H1 (cell line): ENCODE measurements at regions of chr11 and their contacts with region 1.

Region 1: DNA sequence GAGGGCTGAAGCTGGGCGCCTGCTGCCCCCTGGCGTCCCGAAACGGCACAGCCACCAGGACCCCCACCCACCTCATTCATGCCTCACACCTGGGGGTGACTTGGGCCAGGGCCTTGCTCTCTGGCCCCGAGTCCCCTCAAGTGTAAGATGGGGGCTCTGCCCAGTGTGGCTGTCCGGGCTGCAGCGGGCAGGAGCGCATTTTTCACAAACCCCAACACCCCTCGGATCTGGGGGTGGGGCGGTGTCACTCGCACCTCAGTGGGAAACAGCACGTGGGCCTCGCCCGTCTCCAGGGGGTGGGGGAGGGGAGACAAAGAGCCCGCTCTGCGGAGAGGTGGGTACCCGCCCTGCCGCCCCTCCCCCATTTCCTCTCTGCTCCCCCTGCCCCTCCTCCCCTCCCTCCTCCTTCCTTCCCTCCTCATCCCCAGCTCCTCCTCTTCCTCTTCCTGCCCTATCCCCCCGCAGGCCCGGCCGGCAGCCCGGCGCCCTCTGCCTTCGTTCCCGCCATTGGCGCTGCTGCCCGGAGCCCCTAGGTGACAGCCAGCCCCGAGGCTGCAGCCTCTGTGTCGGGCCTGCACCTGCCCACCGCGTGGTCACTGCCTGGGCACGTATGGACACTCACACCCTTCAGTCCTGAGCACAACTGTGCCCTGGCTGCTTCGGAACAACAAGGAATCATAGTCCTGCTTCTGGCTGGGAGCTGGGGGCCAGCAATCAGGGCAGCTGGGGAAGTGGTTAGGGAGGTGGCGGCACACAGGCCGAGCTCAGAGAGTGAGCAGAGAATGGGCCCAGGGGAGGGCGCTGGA is 6.8 kb upstream of the CDKN1C start:
- DNase-seq: peak; percentile 59 to 91
- H3K4me3 ChIP-seq: peak overlapping the region; percentile 25 to 52 (median 40)
- H3K27ac ChIP-seq: peak overlapping the region; percentile 72; the same call in 1 of the 2 replicates
- H3K4me1 ChIP-seq: peaks cover 0 to 20% (median 15%) of the 10 kb centered on the region in 4 experiments; a peak in 6 of 7 replicates
- H3K27me3 ChIP-seq: peaks cover 0 to 23% (median 7%) of the 10 kb centered on the region in 4 experiments; a peak in 5 of 7 replicates
- CTCF ChIP-seq: peak in 2 of 3 experiments; percentile 92 to 93; a peak in 3 of 4 replicates
- EP300 ChIP-seq: 0 out of 3 replicates have a peak, but pooled peaks of 1 of the 2 experiments have one; percentile 6
- POLR2A ChIP-seq: no peak; a peak in 1 of 3 replicates
- RAD21 ChIP-seq: peak; percentile 90 to 94

Region 2: GRCh38 chr11:2799881-2800654 is 92.3 kb before region 1 on chr11:
- CTCF ChIA-PET with region 1: interaction called, 10 read pairs
- POLR2A ChIA-PET with region 1: interaction called, 3 read pairs
- DNase-seq: peak in 1 of 2 experiments; percentile 40
- H3K4me3 ChIP-seq: no peak overlapping the region
- H3K27ac ChIP-seq: no peak overlapping the region
- H3K4me1 ChIP-seq: peaks cover 0 to 1% (median 0%) of the 10 kb centered on the region in 4 experiments; a peak in 3 of 7 replicates
- H3K27me3 ChIP-seq: peaks cover 0 to 22% (median 12%) of the 10 kb centered on the region in 4 experiments; a peak in 6 of 7 replicates
- CTCF ChIP-seq: no peak
- EP300 ChIP-seq: no peak
- POLR2A ChIP-seq: no peak
- RAD21 ChIP-seq: no peak

Region 3: DNA sequence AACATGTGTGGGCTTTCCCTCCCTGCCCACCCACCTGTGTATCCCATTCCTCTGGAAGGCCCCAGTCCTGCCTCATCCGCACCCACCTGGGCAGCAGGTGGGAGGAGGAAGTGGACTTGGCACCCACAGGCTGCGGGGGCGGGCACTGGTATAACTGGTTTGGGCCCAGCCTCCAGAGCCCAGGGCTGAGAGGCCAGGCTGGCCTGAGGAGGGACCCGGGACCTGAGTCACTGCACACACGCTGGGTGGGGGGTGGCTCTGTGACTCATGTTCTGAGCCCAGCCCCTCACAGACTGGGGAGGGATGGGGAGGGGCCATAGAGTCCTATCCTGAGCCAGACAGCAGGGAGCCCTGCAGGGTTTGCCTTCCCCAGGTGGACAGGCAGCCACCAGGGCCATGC is 20.1 kb after region 1 on chr11:
- CTCF ChIA-PET with region 1: interaction called, 19 read pairs
- POLR2A ChIA-PET with region 1: no interaction called
- DNase-seq: no peak
- H3K4me3 ChIP-seq: no peak overlapping the region
- H3K27ac ChIP-seq: no peak overlapping the region
- H3K4me1 ChIP-seq: peaks cover 0 to 19% (median 8%) of the 10 kb centered on the region in 4 experiments; a peak in 4 of 7 replicates
- H3K27me3 ChIP-seq: no peaks in the 10 kb centered on the region
- CTCF ChIP-seq: no peak
- EP300 ChIP-seq: no peak
- POLR2A ChIP-seq: no peak
- RAD21 ChIP-seq: no peak

Region 4: GRCh38 chr11:2921261-2921660 is 28.8 kb after region 1 on chr11:
- CTCF ChIA-PET with region 1: interaction called, 129 read pairs
- POLR2A ChIA-PET with region 1: interaction called, 4 read pairs
- DNase-seq: no peak
- H3K4me3 ChIP-seq: no peak overlapping the region
- H3K27ac ChIP-seq: no peak overlapping the region
- H3K4me1 ChIP-seq: no peaks in the 10 kb centered on the region
- H3K27me3 ChIP-seq: peaks cover 0 to 4% (median 0%) of the 10 kb centered on the region in 4 experiments; a peak in 1 of 7 replicates
- CTCF ChIP-seq: no peak
- EP300 ChIP-seq: no peak
- POLR2A ChIP-seq: no peak
- RAD21 ChIP-seq: no peak

Region 5: DNA sequence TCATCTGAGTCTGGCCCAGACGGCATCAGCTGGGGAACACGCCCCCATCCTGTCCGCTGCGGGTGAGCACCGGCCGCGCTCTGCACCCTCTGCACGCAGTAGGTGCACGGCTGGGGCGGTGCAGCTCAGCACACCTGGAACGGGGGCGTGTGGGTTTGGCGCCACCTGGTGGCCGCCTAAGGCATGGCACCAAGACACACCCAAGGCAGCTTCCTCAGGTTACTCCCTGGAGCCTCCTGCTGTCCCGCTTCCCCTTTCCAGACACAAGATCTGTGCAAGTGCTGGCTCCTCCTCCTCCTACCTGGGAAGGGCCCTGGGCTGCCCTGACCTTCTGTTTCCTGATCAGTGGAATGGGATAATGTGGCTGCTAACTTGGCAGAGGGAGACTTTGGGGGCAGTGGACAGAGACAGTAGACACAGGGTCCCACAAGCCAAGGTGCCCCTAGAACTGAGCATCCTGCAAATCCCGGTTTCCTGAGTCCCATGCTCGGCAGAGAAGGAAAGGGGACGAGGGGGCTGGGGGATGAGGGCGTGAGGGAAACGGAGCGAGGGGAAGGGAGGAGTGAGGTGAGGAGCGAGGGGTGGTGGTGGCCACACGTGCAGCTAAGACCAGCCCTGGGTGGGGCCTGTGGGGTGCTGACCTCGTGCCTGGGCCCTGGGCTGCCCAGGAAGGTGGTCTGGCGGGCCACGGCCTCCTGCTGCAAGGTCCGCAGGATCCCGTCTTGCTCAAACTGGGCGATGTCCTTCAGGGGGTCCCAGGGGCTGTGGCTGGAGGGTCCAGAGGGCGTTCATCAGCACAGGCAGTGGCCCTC is 199.6 kb after region 1 on chr11:
- CTCF ChIA-PET with region 1: no interaction called
- POLR2A ChIA-PET with region 1: no interaction called
- DNase-seq: peak; percentile 94 to 98
- H3K4me3 ChIP-seq: no peak overlapping the region
- H3K27ac ChIP-seq: no peak overlapping the region
- H3K4me1 ChIP-seq: peaks cover 0 to 20% (median 6%) of the 10 kb centered on the region in 4 experiments; a peak in 5 of 7 replicates
- H3K27me3 ChIP-seq: no peaks in the 10 kb centered on the region
- CTCF ChIP-seq: peak in 2 of 3 experiments; percentile 99; a peak in 3 of 4 replicates
- EP300 ChIP-seq: peak in 1 of 2 experiments; percentile 74; a peak in 1 of 3 replicates
- POLR2A ChIP-seq: no peak
- RAD21 ChIP-seq: peak; percentile 96 to 97